Kidney (tissue), 22 donors: ENCODE measurements at regions of chr6 and their contacts with region 1.

Region 1: GRCh38 chr6:132279592-132280139 is 121.6 kb downstream of the MOXD1 start:
- DNase-seq: peak; percentile 70 to 90 (median 77)
- H3K4me3 ChIP-seq: peak overlapping the region; percentile 61 to 95 (median 90)
- H3K27ac ChIP-seq: no peak overlapping the region
- H3K4me1 ChIP-seq: no peaks in the 10 kb centered on the region
- H3K27me3 ChIP-seq: no peaks in the 10 kb centered on the region
- CTCF ChIP-seq: peak; percentile 78

Region 2: DNA sequence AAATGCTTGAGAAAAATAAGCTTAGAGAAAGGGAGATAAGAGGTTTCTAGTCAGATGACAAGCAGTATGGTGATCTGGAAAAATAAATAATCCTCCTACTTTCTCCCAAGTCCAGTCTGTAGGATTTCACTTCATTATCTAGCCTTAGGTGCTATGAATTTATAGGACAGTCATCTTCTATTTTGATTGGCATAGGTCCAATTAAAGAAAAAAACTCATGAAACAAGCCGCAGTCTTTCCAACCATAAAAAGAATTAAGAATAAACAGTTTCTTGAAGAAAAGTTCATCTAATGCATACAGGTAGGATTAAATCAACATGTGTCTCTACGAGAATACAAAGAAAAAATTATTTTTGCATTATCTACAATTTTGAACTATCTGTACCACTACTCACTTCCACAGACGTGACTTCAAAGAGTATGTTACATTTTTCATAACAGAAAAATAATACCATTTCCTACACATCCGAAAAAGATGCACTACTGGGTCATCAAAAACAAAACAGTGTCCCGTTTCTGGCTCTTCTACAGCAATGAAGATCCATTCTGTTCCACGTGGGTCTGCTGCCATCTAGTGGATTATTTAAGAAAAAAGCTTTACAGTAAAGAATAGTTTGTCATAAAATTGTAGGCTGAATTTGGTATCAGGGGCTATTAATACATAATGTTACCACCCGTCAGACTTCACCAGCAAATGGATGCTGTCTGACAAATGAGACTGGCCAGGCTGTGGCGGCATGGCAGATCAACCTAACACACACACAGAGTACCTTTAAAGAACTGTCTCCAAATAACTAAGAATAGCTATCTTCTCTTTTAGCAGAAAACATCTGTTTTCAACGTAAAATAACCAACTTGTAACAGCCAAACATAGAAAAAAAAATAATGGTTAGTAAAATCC is 204.4 kb after region 1 on chr6:
- intact Hi-C with region 1: loop called (anchors 10 kb)
- DNase-seq: peak in 3 of 5 donors; percentile 48 to 90 (median 83)
- H3K4me3 ChIP-seq: no peak overlapping the region
- H3K27ac ChIP-seq: no peak overlapping the region
- H3K4me1 ChIP-seq: no peaks in the 10 kb centered on the region
- H3K27me3 ChIP-seq: no peaks in the 10 kb centered on the region
- CTCF ChIP-seq: peak; percentile 67